Panc1 (cell line): ENCODE measurements at regions of chr5 and their contacts with region 1.

Region 1: GRCh38 chr5:55534436-55535198 is at the start of gene PLPP1:
- DNase-seq: no peak
- ATAC-seq: peak; percentile 95
- H3K4me3 ChIP-seq: peak within 1 kb of the TSS; percentile 80 to 81
- H3K27ac ChIP-seq: peak within 1 kb of the TSS; percentile 95
- H3K4me1 ChIP-seq: peaks cover 17% of the 10 kb centered on the region
- H3K27me3 ChIP-seq: no peaks in the 10 kb centered on the region
- CTCF ChIP-seq: no peak
- total RNA-seq, gene PLPP1: 35.7 TPM

Region 2: DNA sequence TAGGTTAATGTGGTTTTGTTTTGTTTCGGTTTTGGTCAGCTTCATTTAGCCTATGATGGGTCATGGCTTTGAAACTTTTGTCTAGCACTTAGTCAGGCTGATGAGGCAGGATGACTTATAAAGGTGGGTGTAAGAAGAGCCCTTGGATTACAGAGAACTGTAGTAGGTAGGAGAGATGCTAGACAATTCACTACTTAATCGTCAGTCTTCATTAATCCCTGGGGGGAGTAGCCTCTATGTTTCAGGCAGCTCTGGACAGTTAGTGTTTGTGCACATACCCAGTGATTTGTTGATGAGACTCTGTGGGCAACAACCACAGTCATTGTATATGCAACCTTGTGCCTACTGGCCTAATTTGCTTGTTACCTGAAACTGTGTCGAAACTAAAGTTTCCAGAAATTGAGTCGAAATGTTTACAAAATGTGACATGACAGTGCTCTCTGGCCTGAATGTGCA is 113.5 kb before region 1 on chr5:
- CTCF ChIA-PET with region 1: no interaction called
- POLR2A ChIA-PET with region 1: no interaction called
- in situ Hi-C with region 1: no loop called
- intact Hi-C with region 1: loop called (anchors 10 kb)
- DNase-seq: no peak
- ATAC-seq: no peak
- H3K4me3 ChIP-seq: no peak overlapping the region
- H3K27ac ChIP-seq: no peak overlapping the region
- H3K4me1 ChIP-seq: no peaks in the 10 kb centered on the region
- H3K27me3 ChIP-seq: no peaks in the 10 kb centered on the region
- CTCF ChIP-seq: no peak

Region 3: GRCh38 chr5:55517804-55518203 is 16.8 kb before region 1 on chr5:
- CTCF ChIA-PET with region 1: no interaction called
- POLR2A ChIA-PET with region 1: interaction called, 15 read pairs
- in situ Hi-C with region 1: no loop called
- intact Hi-C with region 1: no loop called
- DNase-seq: no peak
- ATAC-seq: no peak
- H3K4me3 ChIP-seq: no peak overlapping the region
- H3K27ac ChIP-seq: no peak overlapping the region
- H3K4me1 ChIP-seq: no peaks in the 10 kb centered on the region
- H3K27me3 ChIP-seq: no peaks in the 10 kb centered on the region
- CTCF ChIP-seq: no peak

Region 4: DNA sequence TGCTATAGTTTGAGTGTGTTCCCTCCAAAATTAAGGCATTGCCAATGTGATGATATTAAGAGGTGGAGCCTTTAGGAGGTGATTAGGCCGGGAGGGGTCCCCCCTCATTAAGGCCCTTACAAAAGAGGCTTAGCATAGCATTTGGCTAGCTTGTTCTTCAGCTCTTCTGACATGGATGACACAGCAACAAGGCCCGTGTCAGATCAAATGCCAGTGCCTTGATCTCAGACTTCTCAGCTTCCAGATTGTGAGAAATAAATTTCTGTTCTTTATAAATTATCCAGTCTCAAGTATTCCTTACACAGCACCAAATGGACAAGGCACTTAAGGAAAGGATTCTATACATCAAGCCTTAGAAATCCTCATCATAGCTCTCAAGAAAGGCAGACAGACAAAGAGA is 145.7 kb after region 1 on chr5:
- CTCF ChIA-PET with region 1: no interaction called
- POLR2A ChIA-PET with region 1: no interaction called
- in situ Hi-C with region 1: no loop called
- intact Hi-C with region 1: loop called (anchors 10 kb)
- DNase-seq: no peak
- ATAC-seq: no peak
- H3K4me3 ChIP-seq: no peak overlapping the region
- H3K27ac ChIP-seq: no peak overlapping the region
- H3K4me1 ChIP-seq: no peaks in the 10 kb centered on the region
- H3K27me3 ChIP-seq: no peaks in the 10 kb centered on the region
- CTCF ChIP-seq: no peak

Region 5: GRCh38 chr5:55737793-55738192 is 203.2 kb after region 1 on chr5 and contains the start of gene DDX4:
- CTCF ChIA-PET with region 1: no interaction called
- POLR2A ChIA-PET with region 1: no interaction called
- in situ Hi-C with region 1: no loop called
- intact Hi-C with region 1: no loop called
- DNase-seq: no peak
- ATAC-seq: no peak
- H3K4me3 ChIP-seq: no peak within 1 kb of the TSS
- H3K27ac ChIP-seq: no peak within 1 kb of the TSS
- H3K4me1 ChIP-seq: no peaks in the 10 kb centered on the region
- H3K27me3 ChIP-seq: no peaks in the 10 kb centered on the region
- CTCF ChIP-seq: no peak
- total RNA-seq, gene DDX4: not detected